ENCODE measurements at regions of chr16 and their contacts with region 1.

Region 1: DNA sequence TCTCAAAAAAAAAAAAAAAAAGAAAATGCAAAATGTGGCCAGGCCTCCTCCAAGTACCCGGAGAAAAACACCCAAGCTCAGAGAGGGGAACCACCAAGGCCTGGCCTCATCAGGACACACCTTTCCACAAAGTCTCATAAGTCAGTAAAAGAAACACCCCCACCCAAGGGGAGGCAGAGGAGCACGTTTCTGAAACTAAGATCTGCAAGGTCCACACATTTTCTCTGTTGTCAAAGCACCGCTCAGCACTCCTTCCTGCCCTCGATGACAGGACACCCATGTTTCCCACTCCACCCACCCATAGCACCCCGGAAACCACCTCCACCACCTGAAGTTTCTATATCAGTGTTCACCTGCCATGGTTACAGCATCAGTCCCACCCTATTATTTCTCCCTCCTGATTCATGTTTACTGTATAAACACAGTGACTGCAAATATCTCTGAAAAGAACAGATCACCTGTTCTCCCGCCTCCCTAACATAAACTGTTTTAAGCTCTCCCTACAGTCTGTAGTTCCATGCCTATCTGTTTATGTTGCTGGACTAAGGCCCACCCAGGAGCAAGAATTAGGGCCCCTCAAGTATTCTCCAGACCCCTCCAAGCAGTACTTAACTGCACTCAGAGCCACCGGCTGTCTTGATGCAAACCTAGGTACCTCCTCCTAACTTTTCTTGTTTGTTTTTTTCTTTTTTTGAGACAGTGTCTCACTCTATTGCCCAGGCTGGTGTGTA is 2.0 kb downstream of the CORO7 start:
- DNase-seq: no peak
- ATAC-seq: no peak

Region 2: DNA sequence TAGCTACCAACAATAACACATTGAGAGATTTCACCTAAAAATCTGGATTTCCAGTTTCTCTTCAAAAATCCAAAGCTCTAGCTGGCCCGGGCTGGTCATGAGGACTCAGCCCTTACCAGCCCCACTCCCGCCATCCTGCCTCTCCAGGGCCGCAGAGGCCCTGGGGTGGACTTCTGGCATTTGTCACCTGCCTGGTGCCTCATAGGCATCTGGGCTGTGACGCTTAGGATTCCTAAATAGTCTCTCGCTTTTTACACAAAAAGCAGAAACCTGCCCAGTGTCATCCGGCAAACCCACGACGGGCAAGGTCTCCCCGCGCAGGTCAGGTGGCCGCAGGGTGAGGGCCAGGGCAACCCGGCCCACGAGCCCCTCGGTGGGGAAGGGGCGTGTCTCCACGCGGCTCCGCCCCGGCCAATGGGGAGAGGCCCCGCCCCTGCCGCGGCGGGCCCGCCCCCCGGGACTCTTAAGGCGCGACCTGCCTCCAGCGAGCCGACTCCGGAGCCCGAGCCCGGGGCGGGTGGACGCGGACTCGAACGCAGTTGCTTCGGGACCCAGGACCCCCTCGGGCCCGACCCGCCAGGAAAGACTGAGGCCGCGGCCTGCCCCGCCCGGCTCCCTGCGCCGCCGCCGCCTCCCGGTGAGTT is 42.9 kb before region 1 on chr16 and contains the start of gene VASN:
- intact Hi-C with region 1: loop called (anchors 5 kb)
- DNase-seq: peak; percentile 90
- ATAC-seq: peak; percentile 75
- total RNA-seq, gene VASN: 6.4 TPM

Region 3: GRCh38 chr16:4435337-4436067 is 21.1 kb after region 1 on chr16:
- intact Hi-C with region 1: no loop called
- DNase-seq: no peak
- ATAC-seq: no peak